A549 (cell line): ENCODE measurements at regions of chr12 and their contacts with region 1.

Region 1: GRCh38 chr12:53476769-53477209 is 22.5 kb downstream of the MAP3K12 start:
- DNase-seq: no peak
- ATAC-seq: peak; percentile 47 to 64
- H3K4me3 ChIP-seq: no peak overlapping the region
- H3K27ac ChIP-seq: no peak overlapping the region
- H3K4me1 ChIP-seq: peaks cover 66% of the 10 kb centered on the region
- CTCF ChIP-seq: peak; percentile 57
- EP300 ChIP-seq: no peak
- POLR2A ChIP-seq: no peak
- RAD21 ChIP-seq: peak; percentile 24 to 44; a peak in 4 of 5 replicates

Region 2: GRCh38 chr12:53459097-53459496 is 17.7 kb before region 1 on chr12:
- CTCF ChIA-PET with region 1: interaction called, 14 read pairs
- POLR2A ChIA-PET with region 1: interaction called, 9 read pairs
- DNase-seq: no peak
- ATAC-seq: no peak
- H3K4me3 ChIP-seq: no peak overlapping the region
- H3K27ac ChIP-seq: no peak overlapping the region
- H3K4me1 ChIP-seq: peaks cover 59% of the 10 kb centered on the region
- CTCF ChIP-seq: no peak
- EP300 ChIP-seq: no peak
- POLR2A ChIP-seq: no peak
- RAD21 ChIP-seq: no peak

Region 3: GRCh38 chr12:53465679-53466078 is 11.1 kb before region 1 on chr12:
- CTCF ChIA-PET with region 1: interaction called, 14 read pairs
- POLR2A ChIA-PET with region 1: interaction called, 9 read pairs
- DNase-seq: no peak
- ATAC-seq: peak; percentile 18 to 30; a peak in 3 of 6 replicates
- H3K4me3 ChIP-seq: no peak overlapping the region
- H3K27ac ChIP-seq: no peak overlapping the region
- H3K4me1 ChIP-seq: peaks cover 41% of the 10 kb centered on the region; the same call in 2 of the 3 replicates
- CTCF ChIP-seq: no peak
- EP300 ChIP-seq: no peak
- POLR2A ChIP-seq: no peak
- RAD21 ChIP-seq: no peak

Region 4: DNA sequence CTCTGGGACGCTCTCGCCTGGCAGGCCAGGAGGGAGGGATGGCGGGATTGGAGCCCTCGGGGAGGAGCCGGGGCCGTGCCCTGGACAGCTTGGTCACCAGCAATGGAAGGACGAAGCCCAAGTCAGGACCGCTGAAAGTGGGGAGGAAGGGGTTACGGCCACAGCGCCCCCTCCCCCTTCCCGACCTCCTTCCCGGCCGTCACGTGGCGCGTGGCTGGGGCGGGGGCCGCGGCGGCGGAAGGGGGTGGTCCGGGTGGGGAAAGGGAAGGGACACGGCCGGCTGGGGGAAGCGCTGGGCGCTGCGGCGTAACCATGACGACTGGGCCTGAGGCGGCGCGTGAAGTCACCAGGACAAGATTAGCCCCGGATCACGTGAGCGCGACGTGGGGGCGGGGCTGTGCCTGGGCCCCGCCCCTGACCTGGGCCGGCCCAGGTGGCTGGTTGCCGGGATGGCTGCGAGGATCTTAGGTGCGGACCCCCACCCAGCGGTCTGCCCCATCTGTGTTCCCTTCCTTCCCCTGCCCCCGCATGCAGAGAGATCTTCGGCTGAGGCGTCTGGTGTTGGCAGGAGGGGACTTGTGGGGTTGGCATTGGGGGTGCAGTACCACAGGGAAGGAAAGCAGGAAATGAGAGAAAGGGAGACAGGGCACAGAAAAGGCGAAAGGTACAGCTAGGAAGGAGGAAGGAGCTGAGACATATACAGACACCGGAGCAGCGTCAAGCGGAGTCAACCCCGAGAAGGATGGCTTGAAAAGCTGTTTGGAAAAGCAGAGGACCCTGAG is 16.2 kb after region 1 on chr12:
- CTCF ChIA-PET with region 1: interaction called, 27 read pairs
- POLR2A ChIA-PET with region 1: interaction called, 21 read pairs
- DNase-seq: peak; percentile 72 to 92
- ATAC-seq: peak; percentile 80 to 84
- H3K4me3 ChIP-seq: peak overlapping the region; percentile 60
- H3K27ac ChIP-seq: peak overlapping the region; percentile 89 to 91
- H3K4me1 ChIP-seq: peaks cover 48% of the 10 kb centered on the region
- CTCF ChIP-seq: no peak
- EP300 ChIP-seq: no peak
- POLR2A ChIP-seq: peak; percentile 85
- RAD21 ChIP-seq: no peak; a peak in 1 of 5 replicates

Region 5: GRCh38 chr12:53500776-53501614 is 24.2 kb after region 1 on chr12 and contains the start of gene TARBP2:
- CTCF ChIA-PET with region 1: interaction called, 27 read pairs
- POLR2A ChIA-PET with region 1: interaction called, 34 read pairs
- DNase-seq: peak; percentile 96 to 100
- ATAC-seq: peak; percentile 73 to 82
- H3K4me3 ChIP-seq: peak within 1 kb of the TSS; percentile 64
- H3K27ac ChIP-seq: peak within 1 kb of the TSS; percentile 94 to 96
- H3K4me1 ChIP-seq: peaks cover 45% of the 10 kb centered on the region
- CTCF ChIP-seq: no peak
- EP300 ChIP-seq: no peak
- POLR2A ChIP-seq: peak; percentile 72
- RAD21 ChIP-seq: no peak
- polyA plus RNA-seq, gene TARBP2: 41.5 and 51.2 TPM in 2 replicates

Region 6: DNA sequence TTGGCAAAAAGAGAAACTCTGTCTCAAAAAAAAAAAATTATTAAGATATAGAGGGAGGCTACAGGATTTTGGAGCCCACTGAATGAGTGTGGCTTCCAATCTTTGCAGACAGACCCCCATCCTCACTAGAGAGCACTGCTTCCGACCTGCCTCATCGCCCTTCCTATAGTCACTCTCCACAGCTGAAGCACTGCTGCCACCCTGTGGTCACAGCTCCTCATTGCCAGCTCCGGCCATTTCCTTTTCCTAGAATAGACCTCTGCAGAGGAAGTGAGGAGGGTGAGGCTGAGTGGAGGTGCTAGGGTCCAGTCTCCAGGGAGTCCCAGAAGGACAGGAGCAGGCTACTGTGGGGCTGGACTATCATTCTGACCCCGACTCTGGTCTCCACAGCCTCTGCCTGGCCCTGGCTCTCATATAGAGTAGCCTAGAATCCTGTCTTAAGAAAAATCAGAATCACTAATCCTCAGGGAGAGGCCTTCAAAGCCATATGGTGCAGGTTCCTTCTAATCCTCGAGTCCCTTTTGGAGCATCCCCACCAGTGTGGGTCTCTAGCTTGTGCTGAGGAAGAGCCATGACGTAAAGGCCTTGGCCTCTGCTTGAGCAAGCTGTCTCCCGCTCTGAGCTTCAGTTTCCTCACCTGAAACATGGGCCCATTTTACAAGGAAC is 31.9 kb after region 1 on chr12:
- CTCF ChIA-PET with region 1: interaction called, 24 read pairs
- POLR2A ChIA-PET with region 1: interaction called, 4 read pairs
- DNase-seq: peak; percentile 77 to 85
- ATAC-seq: peak; percentile 85 to 93
- H3K4me3 ChIP-seq: no peak overlapping the region
- H3K27ac ChIP-seq: peak overlapping the region in 1 of 2 experiments; percentile 42; a peak in 1 of 6 replicates
- H3K4me1 ChIP-seq: peaks cover 9% of the 10 kb centered on the region
- CTCF ChIP-seq: peak; percentile 91
- EP300 ChIP-seq: no peak
- POLR2A ChIP-seq: no peak
- RAD21 ChIP-seq: peak; percentile 91 to 98

Region 7: DNA sequence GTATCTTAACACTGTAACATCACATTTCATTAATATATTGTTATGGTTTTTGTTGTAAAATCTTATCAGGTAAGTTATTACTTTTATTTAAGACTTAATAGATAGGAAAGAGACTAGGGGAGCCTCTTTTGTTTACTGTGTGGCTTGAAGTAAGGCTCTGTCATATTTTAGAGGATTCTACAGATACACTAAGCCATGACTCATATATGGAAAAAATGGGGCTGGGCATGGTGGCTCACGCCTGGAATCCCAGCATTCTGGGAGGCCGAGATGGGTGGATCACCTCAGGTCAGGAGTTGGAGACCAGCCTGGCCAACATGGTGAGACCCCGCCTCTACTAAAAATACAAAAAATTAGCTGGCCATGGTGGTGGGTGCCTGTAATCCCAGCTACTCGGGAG is 54.1 kb after region 1 on chr12:
- CTCF ChIA-PET with region 1: no interaction called
- POLR2A ChIA-PET with region 1: no interaction called
- DNase-seq: no peak
- ATAC-seq: peak in 1 of 2 experiments; percentile 68; a peak in 3 of 6 replicates
- H3K4me3 ChIP-seq: no peak overlapping the region
- H3K27ac ChIP-seq: no peak overlapping the region
- H3K4me1 ChIP-seq: peaks cover 5% of the 10 kb centered on the region; the same call in 1 of the 3 replicates
- CTCF ChIP-seq: no peak
- EP300 ChIP-seq: no peak
- POLR2A ChIP-seq: no peak
- RAD21 ChIP-seq: no peak